ENCODE measurements at regions of chr7 and their contacts with region 1.

Region 1: DNA sequence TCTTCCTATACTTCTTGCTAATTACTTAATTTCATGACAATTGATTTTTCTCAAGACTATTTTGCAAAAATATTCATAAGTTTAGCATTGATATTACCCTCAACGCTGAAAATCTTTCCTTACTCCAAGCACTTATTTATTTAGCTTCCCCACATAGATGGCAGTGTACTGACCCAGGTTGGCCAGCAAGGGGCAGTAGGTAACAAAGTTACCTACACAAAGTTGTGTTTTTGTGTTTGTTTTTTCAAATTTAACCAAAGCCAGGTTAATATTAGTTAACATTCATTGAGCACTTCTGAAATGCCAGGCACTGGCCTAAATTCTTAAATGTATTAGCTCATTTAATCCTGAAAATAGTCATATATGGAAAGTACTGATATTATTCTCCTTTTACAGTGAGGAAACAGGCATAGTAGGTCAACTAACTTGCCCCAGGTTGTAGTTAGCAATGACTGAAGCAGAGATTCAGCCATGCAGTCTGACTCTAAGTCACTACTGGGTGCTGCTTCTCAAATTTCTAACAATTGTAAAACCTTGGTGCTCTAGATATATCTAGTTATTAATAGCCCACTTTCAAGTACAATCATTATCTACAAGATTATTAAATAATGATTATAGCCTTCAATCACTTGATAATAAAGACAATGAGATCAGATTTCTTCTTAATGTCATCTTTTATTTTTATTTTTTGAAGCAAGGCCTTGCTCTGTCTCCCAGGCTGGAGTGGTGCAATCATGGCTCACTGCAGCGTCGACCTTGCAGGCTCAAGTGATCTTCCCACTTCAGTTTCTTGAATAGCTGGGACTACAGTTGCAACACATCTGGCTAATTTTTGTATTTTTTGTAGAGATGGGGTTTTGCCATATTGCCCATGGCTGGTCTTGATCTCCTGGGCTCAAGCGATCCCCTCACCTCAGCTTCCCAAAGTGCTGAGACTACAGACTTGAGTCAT is 5.8 kb upstream of the GGCT start:
- DNase-seq: no peak
- ATAC-seq: peak in 1 of 8 donors; percentile 60
- H3K4me3 ChIP-seq: no peak overlapping the region
- H3K27ac ChIP-seq: no peak overlapping the region
- H3K4me1 ChIP-seq: peaks cover 0 to 16% (median under 1%) of the 10 kb centered on the region in 9 donors
- H3K27me3 ChIP-seq: no peaks in the 10 kb centered on the region
- CTCF ChIP-seq: peak; percentile 43 to 84 (median 77)

Region 2: GRCh38 chr7:30548762-30549344 is 38.5 kb after region 1 on chr7:
- intact Hi-C with region 1: loop called in 2 of 10 experiments (anchors 5 kb)
- DNase-seq: peak; percentile 26 to 75
- ATAC-seq: peak; percentile 50 to 85 (median 78)
- H3K4me3 ChIP-seq: no peak overlapping the region
- H3K27ac ChIP-seq: peak overlapping the region in 8 of 10 donors; percentile 61 to 84 (median 67)
- H3K4me1 ChIP-seq: peaks cover 0 to 34% (median 22%) of the 10 kb centered on the region in 9 donors
- H3K27me3 ChIP-seq: no peaks in the 10 kb centered on the region
- CTCF ChIP-seq: peak; percentile 64 to 90 (median 85)